AG04450 (cell line): ENCODE measurements at regions of chr19 and their contacts with region 1.

Region 1: DNA sequence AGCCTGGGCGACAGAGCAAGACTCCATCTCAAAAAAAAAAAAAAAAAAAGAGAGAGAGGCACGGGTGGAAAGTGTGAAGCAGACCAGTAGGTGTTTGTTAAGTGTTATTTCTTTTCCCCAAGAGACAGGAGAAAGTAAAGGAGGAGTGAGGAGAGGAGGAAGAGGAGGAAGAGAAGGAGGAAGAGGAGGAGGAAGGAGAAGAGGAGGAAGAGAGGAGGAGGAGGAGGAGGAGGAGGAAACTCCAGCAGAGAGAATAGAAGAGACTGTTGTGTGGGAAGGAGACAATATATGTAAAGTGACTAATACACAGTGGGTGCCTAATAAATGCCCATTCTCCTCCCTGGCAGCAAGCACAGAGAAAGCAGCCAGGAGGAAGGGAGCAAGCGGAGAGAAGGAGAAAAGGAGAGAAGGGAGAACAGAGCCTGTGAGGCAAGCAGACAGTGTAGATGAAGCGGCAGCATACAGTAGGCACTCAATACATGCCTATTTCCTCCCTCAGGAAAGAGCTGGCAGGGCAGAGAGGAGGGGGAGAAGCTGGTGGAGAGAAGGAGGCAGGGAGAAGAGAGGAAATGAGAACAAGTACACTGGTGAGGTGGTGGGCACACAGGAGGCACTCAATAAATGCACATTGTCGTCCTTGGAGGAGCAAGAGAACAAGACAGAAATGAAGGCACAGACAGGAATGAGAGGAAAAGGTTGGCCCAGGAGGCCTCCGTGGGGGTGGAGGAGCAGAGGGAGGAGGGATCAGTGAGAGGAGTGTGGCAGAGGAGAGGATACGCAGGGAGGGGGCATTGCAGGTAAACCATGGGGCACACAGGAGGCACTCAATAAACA is 16.6 kb downstream of the JOSD2 start:
- DNase-seq: no peak
- H3K4me3 ChIP-seq: no peak overlapping the region
- H3K27ac ChIP-seq: no peak overlapping the region
- H3K27me3 ChIP-seq: peaks cover 51% of the 10 kb centered on the region
- CTCF ChIP-seq: no peak

Region 2: GRCh38 chr19:50792210-50792851 is 297.9 kb after region 1 on chr19:
- CTCF ChIA-PET with region 1: no interaction called
- POLR2A ChIA-PET with region 1: interaction called, 10 read pairs
- DNase-seq: no peak
- H3K4me3 ChIP-seq: no peak overlapping the region
- H3K27ac ChIP-seq: no peak overlapping the region
- H3K27me3 ChIP-seq: no peaks in the 10 kb centered on the region
- CTCF ChIP-seq: no peak